Dorsolateral prefrontal cortex (tissue), 120 donors: ENCODE measurements at regions of chr1 and their contacts with region 1.

Region 1: GRCh38 chr1:209368864-209369598 is 214.5 kb upstream of the CAMK1G start:
- DNase-seq: peak in 3 of 10 donors; percentile 5 to 72 (median 38)
- H3K4me3 ChIP-seq: no peak overlapping the region
- H3K27ac ChIP-seq: peak overlapping the region in 4 of 59 donors; percentile 9 to 60 (median 44)
- H3K27me3 ChIP-seq: no peaks in the 10 kb centered on the region
- CTCF ChIP-seq: no peak

Region 2: DNA sequence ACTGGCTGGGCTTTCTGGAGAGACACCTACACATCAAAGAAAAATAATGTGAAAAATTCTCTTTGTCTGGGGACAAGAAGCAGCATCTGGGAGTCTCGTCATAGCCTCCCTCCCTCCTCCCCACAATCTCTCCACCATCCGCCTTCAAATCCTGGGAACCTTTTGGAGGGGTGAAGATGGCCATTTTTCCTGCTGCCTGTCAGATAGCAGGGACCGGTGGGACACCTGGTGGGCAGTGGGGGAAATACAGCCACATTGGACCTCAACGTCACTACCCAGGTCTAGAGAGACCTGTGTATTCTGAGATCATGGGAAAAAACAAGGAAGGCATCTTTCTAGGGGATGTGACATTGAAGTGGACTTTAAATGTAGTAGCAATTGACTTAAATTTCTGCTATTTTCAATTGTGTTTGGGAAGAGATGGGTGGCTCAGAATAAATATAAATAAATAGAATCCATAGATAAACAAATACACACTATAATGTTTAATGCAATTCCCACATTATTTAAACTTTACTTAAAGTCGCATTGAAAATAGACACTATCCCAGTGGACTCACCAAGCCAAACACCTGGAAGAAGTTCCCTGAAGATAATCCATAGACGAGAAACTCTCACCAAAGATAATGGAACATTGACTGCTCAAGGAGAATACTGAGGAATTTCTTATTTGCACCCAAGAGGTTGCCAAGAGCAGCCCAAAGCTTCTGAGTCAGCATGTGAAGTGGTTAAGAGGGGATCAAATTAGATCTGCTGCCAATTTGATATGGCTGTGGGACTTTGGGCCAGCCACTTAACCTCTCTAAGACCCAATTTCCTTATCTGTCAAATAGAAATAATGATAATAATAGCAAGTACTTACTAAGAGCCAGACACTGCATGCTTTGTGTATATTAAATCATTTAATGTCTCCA is 66.9 kb after region 1 on chr1:
- intact Hi-C with region 1: loop called in 1 of 2 experiments (anchors 2 kb)
- DNase-seq: peak; percentile 59 to 87 (median 78)
- H3K4me3 ChIP-seq: no peak overlapping the region
- H3K27ac ChIP-seq: peak overlapping the region in 39 of 59 donors; percentile 1 to 75 (median 53)
- H3K27me3 ChIP-seq: no peaks in the 10 kb centered on the region
- CTCF ChIP-seq: peak; percentile 50 to 78 (median 68)